Activated T-helper 1 cell treated with anti-CD3 and anti-CD28 coated beads, Interleukin-12 subunit alpha, Interleukin-12 subunit beta, Interleukin-2, Interleukin-4 antibody, amounts not matched to agents 30 ng/mL and 10 ng/mL and 1 ng/mL, durations not matched to agents 14 hours and 24 hours and 36 hours (primary cell): ENCODE measurements at regions of chr2 and their contacts with region 1.

Region 1: DNA sequence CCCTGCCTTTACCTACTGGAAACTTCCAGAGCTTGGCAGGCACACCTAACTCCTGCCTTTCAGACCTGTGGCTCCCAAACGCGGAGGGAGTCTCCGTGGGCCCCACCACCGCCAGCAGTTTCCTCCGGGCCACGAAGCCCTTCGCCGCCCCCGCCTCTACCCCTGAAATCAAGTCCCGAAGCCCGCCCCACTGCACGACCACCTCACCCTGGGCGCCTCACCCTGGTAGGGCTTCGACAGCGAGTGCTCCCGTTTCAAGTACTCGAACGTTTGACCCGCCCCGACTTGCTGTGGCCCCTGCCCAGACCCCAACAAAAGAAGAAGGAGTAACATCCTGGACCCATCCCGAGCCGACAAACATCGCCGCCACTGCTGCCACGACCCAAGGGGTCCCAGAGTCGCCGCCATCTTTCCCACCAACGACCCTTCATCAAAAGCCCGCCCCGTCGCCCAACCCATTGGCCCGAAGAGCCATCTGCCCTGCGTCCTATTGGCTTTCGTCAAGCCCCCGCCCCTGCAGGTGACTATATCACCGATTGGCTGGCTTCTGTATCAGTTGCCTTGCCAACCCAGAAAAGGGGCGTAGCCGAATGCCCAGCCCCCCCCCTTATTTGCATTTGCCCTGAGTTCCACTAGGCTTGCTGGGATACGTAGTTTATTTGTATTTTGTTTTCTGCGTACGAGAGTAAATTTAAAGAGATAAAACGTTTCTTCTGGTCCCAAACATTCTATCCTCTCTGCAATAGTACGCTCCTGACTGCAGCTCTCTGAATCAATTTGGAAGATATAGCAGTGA is at the start of gene LMAN2L:
- DNase-seq: peak; percentile 94
- H3K4me3 Mint-ChIP-seq: peak within 1 kb of the TSS; percentile 90
- H3K27ac Mint-ChIP-seq: peak within 1 kb of the TSS; percentile 77
- H3K4me1 Mint-ChIP-seq: peaks cover 32% of the 10 kb centered on the region
- H3K27me3 Mint-ChIP-seq: no peaks in the 10 kb centered on the region
- total RNA-seq, gene LMAN2L: 5.6 and 6.0 TPM in 2 replicates

Region 2: DNA sequence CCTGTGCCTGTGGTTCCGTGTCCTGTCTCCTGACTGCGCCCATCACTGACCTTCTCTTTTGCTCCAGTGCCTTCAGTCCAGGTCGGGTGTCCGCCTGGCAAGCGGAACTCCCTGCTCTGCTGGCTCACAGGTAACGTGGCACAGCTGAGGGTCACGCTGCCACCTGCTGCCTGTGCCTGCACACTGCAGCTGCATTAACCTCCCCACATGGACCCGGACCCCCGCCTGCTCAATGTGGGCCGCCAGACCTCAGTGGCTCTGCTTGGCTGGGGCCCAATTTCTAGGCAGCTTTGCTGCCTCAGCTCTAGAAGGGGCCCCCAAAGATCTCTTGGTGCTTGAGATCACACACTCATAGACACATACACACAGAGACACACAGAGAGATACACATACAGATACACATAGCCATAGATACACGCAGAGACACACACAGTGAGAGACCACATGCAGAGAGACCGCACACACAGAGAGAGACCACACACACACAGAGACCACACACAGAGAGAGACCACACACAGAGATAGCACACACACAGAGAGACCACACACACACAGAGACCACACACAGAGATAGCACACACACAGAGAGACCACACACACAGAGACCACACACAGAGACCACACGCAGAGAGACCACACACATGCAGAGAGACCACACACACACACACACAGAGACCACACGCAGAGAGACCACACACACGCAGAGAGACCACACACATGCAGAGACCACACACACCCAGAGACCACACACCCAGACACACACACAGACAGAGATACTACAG is 61.4 kb after region 1 on chr2:
- intact Hi-C with region 1: loop called (anchors 1 kb)
- DNase-seq: peak; percentile 49
- H3K4me3 Mint-ChIP-seq: no peak overlapping the region
- H3K27ac Mint-ChIP-seq: no peak overlapping the region
- H3K4me1 Mint-ChIP-seq: peaks cover 2% of the 10 kb centered on the region
- H3K27me3 Mint-ChIP-seq: no peaks in the 10 kb centered on the region